RWPE1 (cell line): ENCODE measurements at regions of chr20 and their contacts with region 1.

Region 1: DNA sequence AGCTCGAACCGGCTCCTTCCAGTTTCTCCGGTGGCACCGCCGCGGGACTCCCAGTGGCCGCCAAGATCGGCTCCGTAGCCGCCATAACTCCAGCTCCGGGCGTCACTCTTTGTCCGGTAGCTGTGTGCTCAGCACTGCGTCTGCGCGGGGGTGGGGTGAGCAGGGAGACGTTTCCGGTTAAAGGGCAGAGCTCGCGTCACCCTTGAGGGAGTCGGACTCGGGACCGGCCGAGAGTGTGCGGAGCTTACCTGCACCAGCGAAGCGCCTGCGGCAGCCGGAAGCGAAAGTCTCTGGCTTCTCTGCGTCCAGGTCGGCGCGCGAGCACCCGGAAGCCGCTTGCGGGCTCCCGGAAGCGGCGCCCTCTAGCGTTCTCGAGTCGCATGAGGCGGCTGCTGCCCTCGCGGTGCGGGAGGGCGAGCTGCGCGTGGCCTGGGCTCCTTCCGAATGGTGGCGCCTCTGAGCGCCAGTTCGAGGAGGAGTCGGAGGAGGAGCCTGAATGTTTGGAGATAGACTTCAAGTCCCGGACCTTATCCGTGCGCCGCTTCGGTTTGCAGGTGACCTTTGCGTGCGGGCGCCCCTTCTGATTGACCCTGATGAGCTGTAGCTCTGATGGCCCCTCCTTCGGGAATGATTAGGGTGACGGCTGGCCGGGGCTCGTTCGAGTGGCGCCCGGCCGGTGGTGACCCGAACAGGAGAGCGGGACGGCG is at the start of gene SCAND1:
- DNase-seq: peak; percentile 100
- H3K27ac ChIP-seq: peak within 1 kb of the TSS; percentile 99
- CTCF ChIP-seq: peak; percentile 100

Region 2: GRCh38 chr20:35901678-35902544 is 52.4 kb before region 1 on chr20:
- CTCF ChIA-PET with region 1: no interaction called
- POLR2A ChIA-PET with region 1: no interaction called
- DNase-seq: peak; percentile 95
- H3K27ac ChIP-seq: peak overlapping the region; percentile 36
- CTCF ChIP-seq: no peak

Region 3: DNA sequence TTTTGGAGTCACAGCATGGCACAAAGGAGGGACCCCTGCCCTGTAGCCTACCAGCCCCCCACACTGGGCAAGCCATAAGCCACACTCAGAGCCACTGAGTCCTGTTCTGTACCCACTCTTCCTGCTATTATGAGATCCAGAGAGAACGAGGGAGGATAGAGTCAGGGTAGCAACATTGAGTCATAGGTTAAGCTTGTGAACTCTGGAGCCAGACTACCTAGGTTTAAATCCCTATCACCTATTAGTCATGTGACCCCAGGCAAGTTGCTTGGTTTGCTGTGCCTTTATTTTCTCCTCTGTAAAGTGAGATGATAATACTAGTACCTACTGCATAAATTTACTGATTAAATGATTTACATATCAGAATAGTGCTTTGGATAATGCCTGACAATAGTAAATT is 14.6 kb after region 1 on chr20:
- CTCF ChIA-PET with region 1: interaction called, 13 read pairs
- POLR2A ChIA-PET with region 1: interaction called, 4 read pairs
- DNase-seq: peak; percentile 94
- H3K27ac ChIP-seq: no peak overlapping the region
- CTCF ChIP-seq: no peak

Region 4: GRCh38 chr20:36128463-36129159 is 174.3 kb after region 1 on chr20:
- CTCF ChIA-PET with region 1: no interaction called
- POLR2A ChIA-PET with region 1: interaction called, 11 read pairs
- DNase-seq: peak; percentile 57
- H3K27ac ChIP-seq: peak overlapping the region; percentile 22
- CTCF ChIP-seq: no peak